Mammary epithelial cell (primary cell): ENCODE measurements at regions of chr6 and their contacts with region 1.

Region 1: DNA sequence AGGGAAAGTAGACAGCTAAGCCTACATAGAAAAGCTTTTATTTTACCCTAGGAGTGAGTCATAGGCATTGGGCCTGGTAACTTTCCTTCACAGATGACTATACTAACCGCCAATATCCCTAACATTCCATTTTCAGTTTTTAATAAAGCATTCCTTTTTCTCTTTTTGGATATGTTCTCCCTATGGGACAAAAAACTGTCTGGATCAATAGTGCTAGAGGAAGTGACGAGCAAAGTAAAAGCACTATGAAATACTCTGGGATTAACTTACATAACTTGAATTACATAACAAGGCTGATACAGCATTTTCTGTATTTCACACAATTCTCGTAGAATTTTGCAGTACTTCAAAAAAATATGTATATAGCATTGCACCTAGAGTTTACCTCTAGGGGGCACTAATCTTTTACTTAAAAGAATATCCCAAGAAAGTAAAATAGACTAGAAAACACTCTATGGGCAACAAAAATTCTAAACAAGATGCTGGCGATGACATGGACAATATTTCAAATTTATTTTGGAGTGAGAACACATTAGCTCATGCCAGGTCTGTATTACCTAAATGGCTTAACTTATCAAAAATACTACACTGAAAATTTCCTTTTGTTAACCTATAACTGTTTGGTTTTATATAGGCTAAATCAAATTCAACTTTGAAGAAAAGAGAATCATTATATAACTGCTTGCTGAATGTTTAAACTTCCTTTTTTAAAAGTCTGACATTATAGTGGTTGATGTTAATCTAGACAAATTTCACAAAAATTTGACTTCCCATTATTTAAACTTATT is 66.3 kb upstream of the DST start:
- DNase-seq: peak; percentile 68
- H3K4me3 ChIP-seq: peak overlapping the region; percentile 8 to 41 (median 39)
- H3K27ac ChIP-seq: peak overlapping the region; percentile 75
- H3K4me1 ChIP-seq: peaks cover 14% of the 10 kb centered on the region
- H3K27me3 ChIP-seq: no peaks in the 10 kb centered on the region
- CTCF ChIP-seq: peak; percentile 52 to 59

Region 2: GRCh38 chr6:56757588-56757984 is 48.6 kb after region 1 on chr6:
- CTCF ChIA-PET with region 1: no interaction called
- dilution Hi-C with region 1: no loop called
- in situ Hi-C with region 1: loop called in 1 of 2 experiments (anchors 10 kb)
- intact Hi-C with region 1: loop called (anchors 1 kb)
- DNase-seq: peak; percentile 35
- H3K4me3 ChIP-seq: no peak overlapping the region
- H3K27ac ChIP-seq: no peak overlapping the region
- H3K4me1 ChIP-seq: peaks cover 42% of the 10 kb centered on the region
- H3K27me3 ChIP-seq: no peaks in the 10 kb centered on the region
- CTCF ChIP-seq: peak; percentile 55 to 76

Region 3: GRCh38 chr6:56851541-56852259 is 142.7 kb after region 1 on chr6:
- CTCF ChIA-PET with region 1: interaction called, 4 read pairs
- dilution Hi-C with region 1: no loop called
- in situ Hi-C with region 1: no loop called
- intact Hi-C with region 1: loop called (anchors 1 kb)
- DNase-seq: peak; percentile 81
- H3K4me3 ChIP-seq: peak overlapping the region; percentile 41 to 51 (median 49)
- H3K27ac ChIP-seq: peak overlapping the region; percentile 30
- H3K4me1 ChIP-seq: peaks cover 25% of the 10 kb centered on the region
- H3K27me3 ChIP-seq: no peaks in the 10 kb centered on the region
- CTCF ChIP-seq: peak; percentile 60 to 75